ENCODE measurements at regions of chr9 and their contacts with region 1.

Region 1: GRCh38 chr9:6827439-6827838 is 69.7 kb downstream of the KDM4C start:
- DNase-seq: peak; percentile 79
- ATAC-seq: peak; percentile 57
- H3K4me3 ChIP-seq: no peak overlapping the region
- H3K27ac ChIP-seq: no peak overlapping the region
- H3K4me1 ChIP-seq: peaks cover 10% of the 10 kb centered on the region
- H3K27me3 ChIP-seq: no peaks in the 10 kb centered on the region
- CTCF ChIP-seq: peak; percentile 76

Region 2: GRCh38 chr9:6779417-6780241 is 47.8 kb before region 1 on chr9:
- CTCF ChIA-PET with region 1: no interaction called
- POLR2A ChIA-PET with region 1: interaction called, 12 read pairs
- intact Hi-C with region 1: no loop called
- DNase-seq: no peak
- ATAC-seq: no peak
- H3K4me3 ChIP-seq: no peak overlapping the region
- H3K27ac ChIP-seq: no peak overlapping the region
- H3K4me1 ChIP-seq: no peaks in the 10 kb centered on the region
- H3K27me3 ChIP-seq: no peaks in the 10 kb centered on the region
- CTCF ChIP-seq: no peak

Region 3: DNA sequence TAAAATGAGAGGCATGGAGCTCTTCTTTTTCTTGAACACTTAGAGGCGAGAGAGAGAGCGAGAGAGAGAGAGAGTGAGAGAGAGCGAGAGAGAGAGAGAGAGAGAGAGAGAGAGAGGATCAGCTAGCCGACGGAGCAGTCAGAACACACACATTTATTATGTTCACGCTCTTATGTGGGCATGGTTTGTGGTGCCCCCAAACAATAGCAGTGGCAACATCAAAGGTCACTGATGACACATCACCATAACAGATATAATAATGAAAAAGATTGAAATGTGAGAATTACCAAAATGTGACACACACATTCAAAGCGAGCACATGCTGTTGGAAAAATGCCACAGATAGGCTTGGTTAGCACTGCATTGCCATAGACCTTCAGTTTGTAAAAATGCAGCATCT is 46.4 kb after region 1 on chr9:
- CTCF ChIA-PET with region 1: no interaction called
- POLR2A ChIA-PET with region 1: no interaction called
- intact Hi-C with region 1: no loop called
- DNase-seq: no peak
- ATAC-seq: no peak
- H3K4me3 ChIP-seq: no peak overlapping the region
- H3K27ac ChIP-seq: no peak overlapping the region
- H3K4me1 ChIP-seq: peaks cover 16% of the 10 kb centered on the region
- H3K27me3 ChIP-seq: no peaks in the 10 kb centered on the region
- CTCF ChIP-seq: no peak

Region 4: DNA sequence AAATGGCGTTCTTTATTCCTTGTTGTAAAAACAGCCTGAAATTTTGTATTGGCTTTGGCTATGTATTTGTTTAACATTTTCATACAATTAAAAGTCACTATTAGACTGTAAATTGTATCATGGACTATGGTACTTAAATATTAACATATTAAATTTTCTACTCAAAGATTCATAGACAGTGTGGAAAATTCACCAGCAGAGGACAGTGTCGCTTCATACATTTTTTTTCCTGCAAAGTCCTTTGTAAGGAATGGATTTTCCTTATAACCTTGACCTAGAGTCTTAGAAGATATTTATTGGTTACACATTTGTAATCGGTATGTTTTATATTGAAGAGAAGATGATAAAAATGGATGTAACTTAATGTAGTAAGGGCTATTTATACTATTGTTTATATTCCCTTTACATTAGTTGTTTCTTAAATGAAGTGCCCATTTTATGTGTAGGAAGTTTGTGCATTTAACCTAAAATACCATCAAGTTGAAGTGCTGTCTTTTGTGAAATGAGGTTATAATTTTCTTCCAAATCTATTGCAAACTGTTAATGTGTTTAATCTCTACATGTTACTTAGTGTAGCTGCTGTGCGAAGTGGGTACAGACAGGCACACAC is 80.4 kb after region 1 on chr9:
- CTCF ChIA-PET with region 1: no interaction called
- POLR2A ChIA-PET with region 1: no interaction called
- intact Hi-C with region 1: loop called (anchors 1 kb)
- DNase-seq: peak; percentile 64
- ATAC-seq: no peak; the same call in 1 of the 2 replicates
- H3K4me3 ChIP-seq: no peak overlapping the region
- H3K27ac ChIP-seq: no peak overlapping the region
- H3K4me1 ChIP-seq: peaks cover 6% of the 10 kb centered on the region
- H3K27me3 ChIP-seq: no peaks in the 10 kb centered on the region
- CTCF ChIP-seq: peak; percentile 76